ENCODE measurements at regions of chr3 and their contacts with region 1.

Region 1: GRCh38 chr3:133578548-133579191 is 5.2 kb downstream of the CDV3 start:
- DNase-seq: no peak
- H3K4me3 ChIP-seq: no peak overlapping the region
- H3K27me3 ChIP-seq: no peaks in the 10 kb centered on the region
- CTCF ChIP-seq: peak; percentile 64

Region 2: GRCh38 chr3:133464573-133464972 is 114.1 kb before region 1 on chr3:
- CTCF ChIA-PET with region 1: interaction called, 17 read pairs
- POLR2A ChIA-PET with region 1: no interaction called
- DNase-seq: no peak
- H3K4me3 ChIP-seq: no peak overlapping the region
- H3K27me3 ChIP-seq: no peaks in the 10 kb centered on the region; the same call in 1 of the 2 replicates
- CTCF ChIP-seq: peak; percentile 58

Region 3: DNA sequence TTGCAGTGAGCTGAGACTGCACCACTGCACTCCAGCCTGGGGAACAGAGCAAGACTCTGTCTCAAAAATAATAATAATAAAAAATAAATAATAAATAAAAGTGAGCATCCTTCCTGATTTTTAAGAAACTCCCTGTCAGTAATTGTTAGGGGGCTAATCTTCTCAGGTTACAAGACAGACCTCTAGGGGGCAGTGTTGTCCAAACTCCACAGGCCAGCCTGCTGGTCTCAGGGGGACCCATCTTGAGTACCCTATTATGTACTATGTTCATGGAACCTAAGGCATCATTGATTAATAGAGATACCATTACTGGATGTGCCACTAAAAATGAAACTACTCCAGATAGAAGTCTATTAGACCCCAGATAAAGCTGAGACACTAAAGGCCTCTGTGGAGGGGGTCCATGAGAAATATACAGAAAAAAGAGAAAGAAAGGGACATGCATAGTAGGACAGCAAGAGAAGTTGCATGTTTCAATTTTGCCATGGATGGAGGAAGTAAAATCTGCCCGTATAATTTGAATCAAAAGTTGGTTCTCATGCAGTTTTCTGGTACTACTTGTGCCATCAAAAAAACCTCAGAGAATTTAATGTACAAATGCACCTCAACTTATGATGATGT is 90.6 kb before region 1 on chr3:
- CTCF ChIA-PET with region 1: interaction called, 22 read pairs
- POLR2A ChIA-PET with region 1: no interaction called
- DNase-seq: no peak
- H3K4me3 ChIP-seq: no peak overlapping the region
- H3K27me3 ChIP-seq: no peaks in the 10 kb centered on the region
- CTCF ChIP-seq: peak; percentile 60